PC-9 (cell line): ENCODE measurements at regions of chr13 and their contacts with region 1.

Region 1: GRCh38 chr13:107821492-107821891 is 393.8 kb downstream of the LIG4 start:
- DNase-seq: no peak
- H3K4me3 ChIP-seq: no peak overlapping the region
- H3K27ac ChIP-seq: no peak overlapping the region
- H3K4me1 ChIP-seq: peaks cover 14% of the 10 kb centered on the region
- H3K27me3 ChIP-seq: no peaks in the 10 kb centered on the region
- CTCF ChIP-seq: no peak

Region 2: DNA sequence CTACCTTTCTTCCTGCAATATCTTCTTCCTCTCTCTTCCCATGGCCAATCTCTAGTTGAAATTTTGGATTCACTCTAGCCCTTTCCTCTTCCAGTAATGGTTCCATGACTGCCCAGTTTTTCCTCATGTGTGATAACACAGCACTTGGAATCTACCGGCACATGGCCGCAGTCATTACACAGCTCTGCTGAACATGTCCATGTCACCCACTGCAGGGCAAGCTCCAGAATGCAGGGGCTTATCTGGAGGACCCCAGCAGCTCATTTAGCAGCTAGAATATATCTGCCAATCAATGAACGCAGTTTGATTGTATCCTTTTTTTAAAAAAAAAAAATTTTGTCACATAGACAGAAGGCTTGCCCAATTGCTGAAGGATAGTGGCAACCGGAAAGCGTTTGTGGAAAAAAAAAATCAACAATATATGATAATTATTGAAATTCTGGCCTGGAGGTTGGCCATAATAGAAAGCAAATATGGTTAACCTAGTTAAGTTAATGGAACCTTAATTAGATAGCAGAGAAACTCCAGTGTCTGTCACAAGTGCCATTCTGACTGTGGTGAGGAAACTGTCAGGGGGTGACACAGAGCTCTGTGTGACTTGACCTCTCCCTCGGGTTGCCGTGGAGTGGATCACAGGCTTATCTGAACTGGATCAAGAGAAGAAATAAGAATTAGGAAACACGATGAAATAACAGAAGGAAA is 32.9 kb before region 1 on chr13:
- CTCF ChIA-PET with region 1: no interaction called
- POLR2A ChIA-PET with region 1: no interaction called
- intact Hi-C with region 1: no loop called
- DNase-seq: no peak
- H3K4me3 ChIP-seq: no peak overlapping the region
- H3K27ac ChIP-seq: no peak overlapping the region
- H3K4me1 ChIP-seq: no peaks in the 10 kb centered on the region
- H3K27me3 ChIP-seq: no peaks in the 10 kb centered on the region
- CTCF ChIP-seq: no peak

Region 3: GRCh38 chr13:107847406-107847805 is 25.9 kb after region 1 on chr13:
- CTCF ChIA-PET with region 1: no interaction called
- POLR2A ChIA-PET with region 1: no interaction called
- intact Hi-C with region 1: loop called (anchors 2 kb)
- DNase-seq: no peak
- H3K4me3 ChIP-seq: no peak overlapping the region
- H3K27ac ChIP-seq: no peak overlapping the region
- H3K4me1 ChIP-seq: peaks cover 10% of the 10 kb centered on the region
- H3K27me3 ChIP-seq: no peaks in the 10 kb centered on the region
- CTCF ChIP-seq: no peak